Gastrocnemius medialis (tissue), 4 donors: ENCODE measurements at regions of chr11 and their contacts with region 1.

Region 1: DNA sequence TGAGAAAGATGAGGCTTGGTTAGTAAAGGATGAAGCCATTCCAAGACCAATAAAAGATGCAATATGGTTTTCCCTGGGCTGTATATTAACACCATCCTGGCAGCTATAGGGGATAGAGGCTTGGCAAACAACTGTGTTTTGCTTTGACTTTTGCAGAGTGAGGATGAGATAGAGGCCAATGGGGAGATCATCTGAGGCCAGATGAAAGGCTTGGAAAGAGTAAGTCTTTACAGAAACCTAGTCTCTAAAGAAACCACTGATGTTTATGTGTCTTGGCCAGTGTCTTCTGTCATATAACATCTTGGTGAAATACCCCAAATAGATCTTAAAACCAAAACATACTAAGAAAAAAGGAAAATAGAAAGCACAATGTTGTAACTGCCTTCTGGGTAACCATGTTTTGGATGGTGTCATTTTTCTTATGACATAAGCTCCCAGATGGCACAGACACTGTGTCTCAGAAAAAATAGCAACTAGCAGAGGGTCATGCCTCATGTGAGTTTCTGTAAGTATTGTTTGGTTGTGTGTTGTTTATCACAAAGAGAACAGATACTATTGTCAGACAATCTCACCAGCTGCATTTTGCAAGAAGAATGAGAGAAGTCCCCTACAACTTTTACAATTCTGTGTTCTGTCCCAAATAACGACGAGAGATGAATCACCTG is 305.4 kb downstream of the ST3GAL4 start:
- DNase-seq: no peak
- ATAC-seq: no peak
- H3K4me3 ChIP-seq: no peak overlapping the region
- H3K27ac ChIP-seq: no peak overlapping the region
- H3K4me1 ChIP-seq: peaks cover 0 to 2% of the 10 kb centered on the region in 2 donors
- H3K27me3 ChIP-seq: no peaks in the 10 kb centered on the region
- CTCF ChIP-seq: no peak
- POLR2A ChIP-seq: no peak

Region 2: DNA sequence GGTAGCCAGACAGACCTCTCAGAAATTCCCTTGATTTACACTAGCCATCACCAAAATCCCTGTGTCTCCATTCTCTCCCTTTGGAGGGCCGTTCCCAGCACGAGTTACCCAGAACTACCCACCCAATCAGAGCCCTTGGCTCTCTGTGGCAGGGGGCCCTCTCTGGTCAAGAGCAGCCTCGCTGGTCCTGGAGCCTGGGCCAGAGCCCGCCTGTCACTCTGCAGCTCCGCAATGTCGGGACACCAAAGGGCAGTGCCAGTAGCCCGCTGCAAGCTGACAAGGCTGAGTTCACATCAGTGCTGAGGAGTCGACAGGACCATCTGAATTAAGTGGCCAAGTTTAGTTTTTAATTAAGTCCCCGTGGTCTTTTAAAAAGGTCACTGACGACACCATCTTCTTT is 63.9 kb before region 1 on chr11:
- in situ Hi-C with region 1: no loop called
- intact Hi-C with region 1: loop called (anchors 2 kb)
- DNase-seq: no peak
- ATAC-seq: no peak
- H3K4me3 ChIP-seq: no peak overlapping the region
- H3K27ac ChIP-seq: no peak overlapping the region
- H3K4me1 ChIP-seq: no peaks in the 10 kb centered on the region
- H3K27me3 ChIP-seq: no peaks in the 10 kb centered on the region
- CTCF ChIP-seq: no peak
- POLR2A ChIP-seq: no peak